ENCODE measurements at regions of chr2 and their contacts with region 1.

Region 1: GRCh38 chr2:75466708-75467311 is 93.9 kb downstream of the EVA1A start:
- DNase-seq: peak; percentile 60
- H3K4me3 ChIP-seq: no peak overlapping the region
- H3K27ac ChIP-seq: no peak overlapping the region
- H3K4me1 ChIP-seq: peaks cover 20% of the 10 kb centered on the region
- H3K27me3 ChIP-seq: no peaks in the 10 kb centered on the region
- CTCF ChIP-seq: peak; percentile 78

Region 2: GRCh38 chr2:75560768-75561565 is 94.2 kb after region 1 on chr2 and contains the start of gene EVA1A:
- CTCF ChIA-PET with region 1: no interaction called
- POLR2A ChIA-PET with region 1: no interaction called
- intact Hi-C with region 1: loop called (anchors 2 kb)
- DNase-seq: peak; percentile 89
- H3K4me3 ChIP-seq: peak within 1 kb of the TSS; percentile 61
- H3K27ac ChIP-seq: no peak within 1 kb of the TSS
- H3K4me1 ChIP-seq: peaks cover 14% of the 10 kb centered on the region
- H3K27me3 ChIP-seq: no peaks in the 10 kb centered on the region
- CTCF ChIP-seq: no peak
- total RNA-seq, gene EVA1A: 4.0 and 4.3 TPM in 2 replicates

Region 3: DNA sequence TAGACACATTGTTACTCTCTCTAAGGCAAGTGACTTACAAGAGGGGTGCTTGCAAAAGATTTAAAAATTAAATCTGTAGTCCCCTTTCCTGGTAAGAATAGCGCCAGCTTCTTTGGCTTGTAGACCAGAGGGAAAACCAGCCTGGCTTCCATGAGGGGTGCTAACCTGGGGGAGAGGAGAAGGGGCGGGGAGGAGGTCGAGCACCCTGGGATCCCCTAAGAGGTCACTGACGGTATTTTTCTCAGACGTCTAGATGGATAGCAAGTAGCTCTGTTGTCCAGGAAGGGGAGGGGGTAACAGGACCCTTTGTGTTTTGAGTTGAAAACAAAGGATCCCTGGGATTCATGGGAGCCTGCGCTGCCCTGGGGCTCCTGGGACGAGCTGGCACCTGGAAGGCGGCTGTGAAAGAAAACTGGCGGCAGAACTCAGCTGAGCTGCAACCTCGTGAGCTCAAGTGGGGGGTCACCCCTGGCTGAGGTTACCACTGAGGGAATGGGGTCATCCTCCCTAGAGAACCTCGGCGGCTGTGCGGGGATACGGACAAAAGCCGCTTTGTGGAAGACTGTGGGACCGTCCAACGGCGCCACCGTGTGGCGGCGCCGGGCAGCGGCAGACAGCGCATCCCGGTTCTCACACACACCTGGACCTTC is 142.0 kb after region 1 on chr2:
- CTCF ChIA-PET with region 1: interaction called, 12 read pairs
- POLR2A ChIA-PET with region 1: no interaction called
- intact Hi-C with region 1: loop called (anchors 1 kb)
- DNase-seq: peak; percentile 65
- H3K4me3 ChIP-seq: peak overlapping the region; percentile 30
- H3K27ac ChIP-seq: no peak overlapping the region
- H3K4me1 ChIP-seq: peaks cover 16% of the 10 kb centered on the region
- H3K27me3 ChIP-seq: no peaks in the 10 kb centered on the region
- CTCF ChIP-seq: peak; percentile 97

Region 4: GRCh38 chr2:75627895-75628504 is 161.2 kb after region 1 on chr2:
- CTCF ChIA-PET with region 1: interaction called, 20 read pairs
- POLR2A ChIA-PET with region 1: no interaction called
- intact Hi-C with region 1: loop called (anchors 1 kb)
- DNase-seq: peak; percentile 83
- H3K4me3 ChIP-seq: no peak overlapping the region
- H3K27ac ChIP-seq: no peak overlapping the region
- H3K4me1 ChIP-seq: peaks cover 8% of the 10 kb centered on the region
- H3K27me3 ChIP-seq: no peaks in the 10 kb centered on the region
- CTCF ChIP-seq: peak; percentile 95